GM10248 (cell line): ENCODE measurements at regions of chr6 and their contacts with region 1.

Region 1: GRCh38 chr6:142167486-142167885 is 20.4 kb downstream of the VTA1 start:
- DNase-seq: no peak
- CTCF ChIP-seq: no peak

Region 2: GRCh38 chr6:142146828-142147662 is 20.4 kb before region 1 on chr6 and contains the starts of genes NMBR and VTA1:
- CTCF ChIA-PET with region 1: interaction called, 15 read pairs
- POLR2A ChIA-PET with region 1: no interaction called
- DNase-seq: peak; percentile 89
- CTCF ChIP-seq: peak; percentile 90

Region 3: DNA sequence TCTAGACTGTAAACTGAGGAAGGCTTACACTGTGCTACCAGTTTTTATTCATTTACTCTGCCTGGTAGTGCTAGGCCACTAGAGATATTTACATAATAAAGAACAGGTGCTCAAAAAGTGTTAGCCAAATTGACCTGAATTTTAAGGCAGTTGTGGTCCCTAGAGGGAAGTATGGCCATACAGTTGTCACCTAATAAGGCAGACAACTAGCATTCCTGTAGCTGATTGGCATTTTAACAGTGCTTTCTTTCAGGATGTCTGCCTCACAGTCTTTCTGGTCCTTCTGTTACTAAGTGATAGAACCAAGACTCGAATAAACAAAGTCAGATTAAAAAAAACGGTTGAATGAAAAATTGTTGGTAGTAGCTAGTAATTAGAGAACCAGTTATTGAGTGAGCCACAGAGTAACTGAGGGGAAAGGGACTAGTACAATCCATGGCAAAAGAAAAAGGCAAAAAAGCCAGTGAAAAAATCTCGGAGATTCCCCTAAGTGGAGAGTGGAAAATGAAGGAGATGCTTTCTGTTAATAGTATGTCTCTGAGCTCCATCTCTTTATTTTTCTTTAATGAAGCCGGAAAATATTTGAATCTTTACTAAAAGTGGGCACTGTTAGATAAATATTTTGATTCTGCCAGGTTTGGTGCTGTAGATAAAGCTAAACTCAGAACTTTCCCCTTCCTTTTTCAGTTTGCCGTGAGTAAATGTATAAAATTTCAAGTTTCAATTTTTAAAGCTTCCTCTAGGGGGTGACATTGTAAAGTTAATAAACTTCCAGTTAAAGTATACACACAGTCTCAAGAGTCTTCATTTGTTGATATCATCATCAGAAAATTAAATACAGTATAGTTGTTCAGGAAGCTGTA is 11.4 kb before region 1 on chr6:
- CTCF ChIA-PET with region 1: interaction called, 13 read pairs
- POLR2A ChIA-PET with region 1: no interaction called
- DNase-seq: no peak
- CTCF ChIP-seq: no peak

Region 4: DNA sequence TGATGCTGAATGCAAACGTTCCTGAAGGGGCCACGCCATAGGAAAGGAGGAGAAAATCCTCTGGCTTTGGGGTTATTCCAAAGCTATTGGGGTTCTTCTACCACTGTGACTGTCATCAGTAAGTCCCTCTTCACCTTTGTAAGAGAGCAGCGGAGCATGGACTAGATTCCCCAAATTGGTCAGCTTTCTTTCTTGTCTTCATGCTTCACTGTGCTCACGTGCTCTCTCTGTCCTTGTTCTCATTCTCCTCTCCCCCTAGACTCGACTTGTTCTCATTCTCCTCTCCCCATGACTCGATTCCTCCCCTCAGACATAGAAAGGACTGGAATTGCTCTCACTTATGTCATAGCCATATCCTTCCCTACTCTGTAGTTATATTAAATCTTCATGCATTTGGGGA is 79.5 kb after region 1 on chr6:
- CTCF ChIA-PET with region 1: no interaction called
- POLR2A ChIA-PET with region 1: no interaction called
- DNase-seq: peak; percentile 5
- CTCF ChIP-seq: no peak